Transverse colon (tissue), 4 donors: ENCODE measurements at regions of chr4 and their contacts with region 1.

Region 1: DNA sequence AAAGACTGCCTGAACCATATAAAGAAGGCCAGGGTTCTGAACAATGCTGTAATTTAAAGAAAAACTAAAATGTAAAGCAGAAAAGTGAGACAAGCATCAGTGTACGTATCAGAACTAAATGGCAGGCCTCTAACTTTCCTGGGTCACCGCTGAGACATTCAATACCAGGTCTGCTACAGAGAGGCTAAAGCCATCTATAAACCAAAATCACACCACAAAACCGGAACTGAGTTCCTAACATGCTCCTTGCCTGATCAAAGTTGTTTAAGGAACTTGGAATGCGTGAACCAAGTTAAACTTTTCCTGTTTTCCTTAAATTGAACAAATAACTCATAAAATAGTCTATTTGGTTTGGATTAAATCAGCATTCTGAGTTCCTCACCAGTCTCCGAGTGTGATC is 55.3 kb upstream of the TECRL start:
- DNase-seq: no peak
- H3K4me3 ChIP-seq: no peak overlapping the region
- H3K27ac ChIP-seq: no peak overlapping the region
- H3K4me1 ChIP-seq: no peaks in the 10 kb centered on the region
- H3K27me3 ChIP-seq: no peaks in the 10 kb centered on the region
- CTCF ChIP-seq: no peak
- EP300 ChIP-seq: no peak
- POLR2A ChIP-seq: no peak

Region 2: GRCh38 chr4:62618042-62618441 is 1846.5 kb before region 1 on chr4:
- in situ Hi-C with region 1: no loop called
- intact Hi-C with region 1: loop called (anchors 5 kb)
- DNase-seq: no peak
- H3K4me3 ChIP-seq: no peak overlapping the region
- H3K27ac ChIP-seq: no peak overlapping the region
- H3K4me1 ChIP-seq: no peaks in the 10 kb centered on the region
- H3K27me3 ChIP-seq: no peaks in the 10 kb centered on the region
- CTCF ChIP-seq: no peak
- EP300 ChIP-seq: no peak
- POLR2A ChIP-seq: no peak

Region 3: DNA sequence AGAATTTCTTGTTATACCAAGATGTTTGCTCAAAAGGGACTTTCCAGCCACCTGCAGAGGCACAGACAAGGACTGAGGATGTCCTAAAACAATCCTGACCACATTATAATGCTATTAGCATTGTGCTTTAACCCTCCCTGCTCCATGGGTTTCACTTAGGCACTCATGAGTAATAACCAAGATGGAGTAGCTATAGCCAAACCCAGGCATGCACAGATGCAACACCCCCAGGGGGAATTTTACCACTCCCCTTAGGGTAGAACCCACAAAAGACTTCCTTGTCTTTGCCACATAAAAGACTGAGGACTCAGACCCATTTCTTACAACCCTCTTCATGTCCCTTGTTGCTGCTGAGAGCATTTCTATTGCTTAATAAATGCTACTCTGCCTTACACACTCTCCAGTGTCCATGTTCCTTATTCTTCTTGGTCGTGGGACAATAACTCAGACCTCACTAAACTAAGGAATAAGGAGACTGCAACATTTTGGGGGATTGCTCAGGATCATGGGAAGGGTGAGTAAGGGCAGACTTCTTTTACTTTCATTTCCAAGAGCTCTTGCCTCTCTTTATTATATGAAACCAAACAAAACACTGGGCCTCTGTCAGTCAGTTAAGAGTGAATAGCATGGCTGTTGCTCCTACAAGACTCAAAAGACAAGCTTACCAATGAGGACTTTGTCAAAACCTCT is 158.9 kb before region 1 on chr4:
- in situ Hi-C with region 1: no loop called
- intact Hi-C with region 1: no loop called
- DNase-seq: no peak
- H3K4me3 ChIP-seq: no peak overlapping the region
- H3K27ac ChIP-seq: no peak overlapping the region
- H3K4me1 ChIP-seq: no peaks in the 10 kb centered on the region
- H3K27me3 ChIP-seq: no peaks in the 10 kb centered on the region
- CTCF ChIP-seq: no peak
- EP300 ChIP-seq: no peak
- POLR2A ChIP-seq: no peak